ENCODE measurements at regions of chr15 and their contacts with region 1.

Region 1: DNA sequence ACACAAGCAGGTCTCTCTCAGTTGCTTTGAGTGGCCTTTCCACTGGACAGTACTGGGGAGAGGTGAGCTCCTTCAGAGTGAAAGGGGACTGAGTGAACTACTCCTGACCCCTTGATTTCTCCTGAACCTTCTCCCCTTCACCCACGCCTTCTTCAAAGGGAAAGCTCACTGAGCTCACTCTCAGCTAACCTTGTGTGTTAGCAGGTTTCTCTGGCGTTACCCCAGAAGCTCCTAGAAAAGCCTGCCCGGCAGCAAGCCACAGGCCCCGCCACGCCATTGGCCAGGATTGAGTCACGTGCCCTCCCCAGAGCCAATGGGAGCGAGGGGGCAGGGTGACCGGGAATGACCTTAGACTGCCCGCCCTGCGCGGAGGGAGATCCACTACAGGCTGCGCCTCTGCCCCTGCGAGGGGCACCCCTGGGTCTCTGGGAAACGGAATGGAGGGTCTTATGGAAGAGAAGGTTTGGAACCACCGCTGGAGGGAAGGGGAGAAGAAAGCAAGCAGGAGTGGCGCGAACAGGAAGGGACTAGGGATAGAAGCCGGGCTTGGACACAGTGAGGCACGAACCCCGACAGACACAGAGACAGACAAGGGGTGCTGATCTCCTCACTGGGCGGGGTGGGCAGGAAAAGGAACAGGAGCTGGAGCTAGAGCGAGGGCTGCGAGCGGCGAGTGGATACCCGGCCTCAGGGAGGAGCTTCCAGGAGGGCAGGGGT is 17.4 kb upstream of the CLK3 start:
- DNase-seq: peak; percentile 95
- ATAC-seq: peak; percentile 99
- H3K4me3 Mint-ChIP-seq: peak overlapping the region; percentile 91
- H3K27ac Mint-ChIP-seq: peak overlapping the region; percentile 96
- H3K4me1 Mint-ChIP-seq: peaks cover 24% of the 10 kb centered on the region
- H3K27me3 Mint-ChIP-seq: no peaks in the 10 kb centered on the region

Region 2: DNA sequence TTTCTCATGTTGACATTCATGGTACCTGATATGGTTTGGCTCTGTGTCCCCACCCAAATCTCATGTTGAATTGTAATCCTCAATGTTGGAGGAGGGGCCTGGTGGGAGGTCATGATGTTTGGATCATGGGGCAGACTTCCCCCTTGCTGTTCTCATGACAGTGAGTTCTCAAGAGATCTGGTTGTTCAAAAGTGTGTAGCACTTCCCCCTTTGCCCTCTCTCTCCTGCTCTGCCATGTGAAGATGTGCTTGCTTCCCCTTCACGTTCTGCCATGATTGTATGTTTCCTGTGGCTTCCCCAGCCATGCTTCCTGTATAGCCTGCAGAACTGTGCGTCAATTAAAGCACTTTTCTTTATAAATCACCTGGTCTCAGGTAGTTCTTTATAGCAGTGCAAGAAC is 134.1 kb before region 1 on chr15:
- CTCF ChIA-PET with region 1: no interaction called
- DNase-seq: no peak
- ATAC-seq: no peak
- H3K4me3 Mint-ChIP-seq: peak overlapping the region; percentile 8
- H3K27ac Mint-ChIP-seq: peak overlapping the region; percentile 58
- H3K4me1 Mint-ChIP-seq: peaks cover 46% of the 10 kb centered on the region
- H3K27me3 Mint-ChIP-seq: no peaks in the 10 kb centered on the region

Region 3: GRCh38 chr15:74615508-74616365 is 17.5 kb after region 1 on chr15 and contains the start of gene CLK3:
- CTCF ChIA-PET with region 1: interaction called, 11 read pairs
- DNase-seq: peak; percentile 97
- ATAC-seq: peak; percentile 85
- H3K4me3 Mint-ChIP-seq: peak within 1 kb of the TSS; percentile 92
- H3K27ac Mint-ChIP-seq: peak within 1 kb of the TSS; percentile 97
- H3K4me1 Mint-ChIP-seq: peaks cover 38% of the 10 kb centered on the region
- H3K27me3 Mint-ChIP-seq: no peaks in the 10 kb centered on the region
- total RNA-seq, gene CLK3: 120 to 140 TPM

Measured in activated CD8-positive, alpha-beta memory T cell treated with anti-CD3 and anti-CD28 coated beads, Interleukin-2, amount 10 ng/mL, durations not matched to agents 7 days and 5 days (primary cell).